Activated T-helper 1 cell treated with anti-CD3 and anti-CD28 coated beads, Interleukin-12 subunit alpha, Interleukin-12 subunit beta, Interleukin-2, Interleukin-4 antibody, amounts not matched to agents 30 ng/mL and 10 ng/mL and 1 ng/mL, durations not matched to agents 14 hours and 24 hours and 36 hours (primary cell): ENCODE measurements at regions of chr3 and their contacts with region 1.

Region 1: GRCh38 chr3:56339671-56340070 is 128.6 kb downstream of the ERC2 start:
- DNase-seq: no peak
- H3K4me3 Mint-ChIP-seq: no peak overlapping the region
- H3K27ac Mint-ChIP-seq: no peak overlapping the region
- H3K4me1 Mint-ChIP-seq: no peaks in the 10 kb centered on the region
- H3K27me3 Mint-ChIP-seq: peaks cover 12% of the 10 kb centered on the region

Region 2: DNA sequence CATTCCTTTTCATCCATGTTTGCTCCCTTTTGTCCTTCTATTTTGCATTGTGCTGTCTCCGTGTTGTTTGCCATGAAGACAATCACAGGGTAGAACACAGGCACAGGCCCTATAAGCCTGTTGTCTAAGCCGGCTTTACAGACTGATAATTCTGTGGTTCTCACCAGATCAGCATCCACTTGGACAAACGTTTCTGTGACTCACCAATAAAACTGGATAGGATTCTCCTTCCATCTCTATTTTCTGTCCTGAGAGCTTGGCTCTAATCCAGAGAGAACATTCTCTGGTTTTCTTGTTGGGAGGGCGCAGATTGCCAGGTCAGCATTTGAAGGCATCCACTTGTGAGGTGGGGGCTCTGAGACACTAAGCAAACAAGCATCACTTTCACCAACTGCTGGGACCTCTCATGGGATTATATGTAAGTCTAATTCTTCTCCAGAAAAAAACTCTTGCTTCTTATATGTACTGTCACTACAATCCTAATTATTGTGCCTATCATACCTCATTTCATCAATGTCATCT is 27.0 kb after region 1 on chr3:
- intact Hi-C with region 1: loop called (anchors 1 kb)
- DNase-seq: no peak
- H3K4me3 Mint-ChIP-seq: no peak overlapping the region
- H3K27ac Mint-ChIP-seq: no peak overlapping the region
- H3K4me1 Mint-ChIP-seq: no peaks in the 10 kb centered on the region
- H3K27me3 Mint-ChIP-seq: peaks cover 2% of the 10 kb centered on the region

Region 3: GRCh38 chr3:56443372-56443771 is 103.7 kb after region 1 on chr3:
- intact Hi-C with region 1: loop called (anchors 1 kb)
- DNase-seq: no peak
- H3K4me3 Mint-ChIP-seq: no peak overlapping the region
- H3K27ac Mint-ChIP-seq: no peak overlapping the region
- H3K4me1 Mint-ChIP-seq: no peaks in the 10 kb centered on the region
- H3K27me3 Mint-ChIP-seq: no peaks in the 10 kb centered on the region

Region 4: DNA sequence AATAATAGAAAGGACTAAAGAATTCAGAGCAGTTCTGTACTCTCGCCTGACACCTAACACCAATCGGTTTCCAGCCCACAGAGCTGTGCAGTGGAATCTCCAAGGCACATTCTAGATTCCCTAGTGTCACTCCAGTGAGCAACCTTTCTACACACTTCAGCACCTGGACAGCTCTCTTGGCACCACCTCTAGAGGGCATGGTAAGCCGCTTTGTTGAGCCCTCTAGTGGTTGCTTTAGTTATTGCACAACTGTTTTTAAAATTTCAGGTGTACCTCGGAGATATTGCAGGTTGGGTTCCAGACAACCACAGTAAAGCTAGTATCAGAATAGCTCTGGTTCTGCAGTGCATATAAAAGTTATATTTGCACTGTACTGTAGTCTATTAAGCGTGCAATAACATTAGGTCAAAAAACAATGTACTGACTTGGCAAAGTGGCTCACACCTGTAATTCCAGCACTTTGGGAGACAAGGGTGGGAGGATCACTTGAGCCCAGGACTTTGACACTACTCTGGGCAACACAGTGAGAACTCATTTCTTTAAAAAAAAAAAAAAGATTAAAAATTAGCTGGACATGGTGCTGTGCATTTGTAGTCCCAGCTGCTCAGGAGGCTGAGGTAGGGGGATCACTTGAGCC is 155.1 kb after region 1 on chr3:
- intact Hi-C with region 1: loop called (anchors 2 kb)
- DNase-seq: peak; percentile 55
- H3K4me3 Mint-ChIP-seq: no peak overlapping the region
- H3K27ac Mint-ChIP-seq: no peak overlapping the region
- H3K4me1 Mint-ChIP-seq: no peaks in the 10 kb centered on the region
- H3K27me3 Mint-ChIP-seq: peaks cover 7% of the 10 kb centered on the region